ENCODE measurements at regions of chr14 and their contacts with region 1.

Region 1: GRCh38 chr14:49620182-49621113 is at the starts of genes MGAT2 and RPL36AL:
- DNase-seq: peak; percentile 82 to 98 (median 92)
- ATAC-seq: peak; percentile 84 to 86
- H3K4me3 Mint-ChIP-seq: peak within 1 kb of the TSS; percentile 93 to 99 (median 98)
- H3K27ac Mint-ChIP-seq: peak within 1 kb of the TSS; percentile 97 to 99 (median 99)
- H3K4me1 Mint-ChIP-seq: peaks cover 18 to 65% (median 51%) of the 10 kb centered on the region in 4 donors
- H3K27me3 Mint-ChIP-seq: no peaks in the 10 kb centered on the region
- polyA plus RNA-seq, gene MGAT2: 15.8 to 25.9 (median 19.8) TPM
- polyA plus RNA-seq, gene RPL36AL: 489 to 628 (median 623) TPM

Region 2: GRCh38 chr14:49585803-49586672 is 34.4 kb before region 1 on chr14 and contains the start of gene RPS29:
- POLR2A ChIA-PET with region 1: interaction called, 112 read pairs
- DNase-seq: peak; percentile 87 to 99 (median 98)
- ATAC-seq: peak; percentile 85 to 87
- H3K4me3 Mint-ChIP-seq: peak within 1 kb of the TSS; percentile 89 to 99 (median 94)
- H3K27ac Mint-ChIP-seq: peak within 1 kb of the TSS; percentile 97 to 100 (median 99)
- H3K4me1 Mint-ChIP-seq: peaks cover 21 to 55% (median 46%) of the 10 kb centered on the region in 4 donors
- H3K27me3 Mint-ChIP-seq: peaks cover 0 to 9% (median 0%) of the 10 kb centered on the region in 5 donors
- polyA plus RNA-seq, gene RPS29: 11,853 to 13,490 (median 12,998) TPM

Region 3: GRCh38 chr14:49598485-49599300 is 21.8 kb before region 1 on chr14 and contains the start of gene LRR1:
- POLR2A ChIA-PET with region 1: interaction called, 64 read pairs
- DNase-seq: peak; percentile 72 to 96 (median 84)
- ATAC-seq: peak; percentile 77 to 82
- H3K4me3 Mint-ChIP-seq: peak within 1 kb of the TSS; percentile 94 to 99 (median 98)
- H3K27ac Mint-ChIP-seq: peak within 1 kb of the TSS; percentile 96 to 100 (median 98)
- H3K4me1 Mint-ChIP-seq: peaks cover 5 to 52% (median 31%) of the 10 kb centered on the region in 4 donors
- H3K27me3 Mint-ChIP-seq: no peaks in the 10 kb centered on the region
- polyA plus RNA-seq, gene LRR1: 8.5 to 10.4 (median 8.9) TPM

Region 4: DNA sequence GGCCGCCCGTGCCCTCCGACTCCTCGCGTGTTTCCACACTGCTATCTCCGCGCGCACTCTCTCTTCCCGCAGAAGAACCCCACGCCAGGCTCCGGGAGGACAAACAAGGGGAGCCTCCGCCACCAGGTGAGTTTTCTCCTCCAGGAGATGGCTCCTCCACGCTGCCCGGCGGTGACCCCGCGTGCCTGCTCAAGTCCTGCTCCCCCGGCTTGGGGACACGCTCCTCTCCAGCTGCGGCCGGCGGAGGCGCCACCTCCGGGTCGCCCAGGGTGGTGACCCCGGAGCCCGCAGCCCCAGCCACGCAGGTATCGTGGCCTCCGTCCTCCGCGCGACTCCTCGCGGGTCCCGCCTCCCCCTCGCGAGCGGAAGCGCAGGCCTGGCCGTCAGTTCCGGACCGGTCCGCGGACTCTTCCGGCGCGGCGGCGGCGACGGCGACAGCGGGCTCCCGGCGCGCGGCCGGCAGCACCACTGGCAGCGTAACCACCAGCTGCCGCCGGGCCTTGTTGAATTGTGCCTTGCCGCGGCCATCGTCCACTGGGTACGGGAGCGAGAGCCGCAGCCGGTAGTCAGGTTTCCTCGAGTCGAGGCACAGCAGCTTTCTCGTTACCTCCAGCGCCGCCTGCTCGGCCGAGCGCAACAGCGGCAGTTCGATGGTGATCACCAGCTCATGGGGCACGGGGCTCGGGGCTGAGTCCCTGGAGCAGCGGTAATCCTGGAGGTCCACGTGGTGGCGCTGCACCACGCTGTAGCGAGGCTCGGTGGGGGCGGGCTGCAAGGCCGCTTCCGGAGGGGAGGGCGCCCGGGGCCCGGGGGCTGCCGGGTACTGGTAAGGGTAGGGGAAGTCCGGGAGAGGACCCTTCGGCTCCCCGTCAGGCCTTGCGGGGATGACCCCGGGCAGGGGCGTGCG is 13.4 kb after region 1 on chr14:
- POLR2A ChIA-PET with region 1: interaction called, 203 read pairs
- DNase-seq: peak; percentile 90 to 97 (median 94)
- ATAC-seq: peak; percentile 78 to 82
- H3K4me3 Mint-ChIP-seq: peak overlapping the region; percentile 92 to 99 (median 96)
- H3K27ac Mint-ChIP-seq: peak overlapping the region; percentile 90 to 98 (median 93)
- H3K4me1 Mint-ChIP-seq: peaks cover 15 to 65% (median 56%) of the 10 kb centered on the region in 4 donors
- H3K27me3 Mint-ChIP-seq: no peaks in the 10 kb centered on the region

Region 5: GRCh38 chr14:49692811-49693734 is 72.6 kb after region 1 on chr14 and contains the start of gene KLHDC1:
- POLR2A ChIA-PET with region 1: interaction called, 10 read pairs
- DNase-seq: peak; percentile 67 to 88 (median 78)
- ATAC-seq: peak; percentile 87 to 91
- H3K4me3 Mint-ChIP-seq: peak within 1 kb of the TSS; percentile 74 to 94 (median 90)
- H3K27ac Mint-ChIP-seq: peak within 1 kb of the TSS; percentile 66 to 98 (median 93)
- H3K4me1 Mint-ChIP-seq: peaks cover 2 to 54% (median 40%) of the 10 kb centered on the region in 4 donors
- H3K27me3 Mint-ChIP-seq: no peaks in the 10 kb centered on the region
- polyA plus RNA-seq, gene KLHDC1: 2.6 to 9.0 (median 3.2) TPM

Region 6: GRCh38 chr14:49727171-49727570 is 106.7 kb after region 1 on chr14:
- POLR2A ChIA-PET with region 1: no interaction called
- DNase-seq: no peak
- ATAC-seq: no peak
- H3K4me3 Mint-ChIP-seq: no peak overlapping the region
- H3K27ac Mint-ChIP-seq: peak overlapping the region in 1 of 10 donors; percentile 7
- H3K4me1 Mint-ChIP-seq: no peaks in the 10 kb centered on the region
- H3K27me3 Mint-ChIP-seq: no peaks in the 10 kb centered on the region

Region 7: GRCh38 chr14:49852301-49853157 is 232.1 kb after region 1 on chr14 and contains the start of gene NEMF:
- POLR2A ChIA-PET with region 1: interaction called, 17 read pairs
- DNase-seq: peak; percentile 57 to 89 (median 78)
- ATAC-seq: peak; percentile 80 to 84
- H3K4me3 Mint-ChIP-seq: peak within 1 kb of the TSS; percentile 91 to 100 (median 96)
- H3K27ac Mint-ChIP-seq: peak within 1 kb of the TSS; percentile 93 to 99 (median 96)
- H3K4me1 Mint-ChIP-seq: peaks cover 20 to 48% (median 46%) of the 10 kb centered on the region in 4 donors
- H3K27me3 Mint-ChIP-seq: no peaks in the 10 kb centered on the region
- polyA plus RNA-seq, gene NEMF: 39.6 to 46.1 (median 43.5) TPM

Region 8: DNA sequence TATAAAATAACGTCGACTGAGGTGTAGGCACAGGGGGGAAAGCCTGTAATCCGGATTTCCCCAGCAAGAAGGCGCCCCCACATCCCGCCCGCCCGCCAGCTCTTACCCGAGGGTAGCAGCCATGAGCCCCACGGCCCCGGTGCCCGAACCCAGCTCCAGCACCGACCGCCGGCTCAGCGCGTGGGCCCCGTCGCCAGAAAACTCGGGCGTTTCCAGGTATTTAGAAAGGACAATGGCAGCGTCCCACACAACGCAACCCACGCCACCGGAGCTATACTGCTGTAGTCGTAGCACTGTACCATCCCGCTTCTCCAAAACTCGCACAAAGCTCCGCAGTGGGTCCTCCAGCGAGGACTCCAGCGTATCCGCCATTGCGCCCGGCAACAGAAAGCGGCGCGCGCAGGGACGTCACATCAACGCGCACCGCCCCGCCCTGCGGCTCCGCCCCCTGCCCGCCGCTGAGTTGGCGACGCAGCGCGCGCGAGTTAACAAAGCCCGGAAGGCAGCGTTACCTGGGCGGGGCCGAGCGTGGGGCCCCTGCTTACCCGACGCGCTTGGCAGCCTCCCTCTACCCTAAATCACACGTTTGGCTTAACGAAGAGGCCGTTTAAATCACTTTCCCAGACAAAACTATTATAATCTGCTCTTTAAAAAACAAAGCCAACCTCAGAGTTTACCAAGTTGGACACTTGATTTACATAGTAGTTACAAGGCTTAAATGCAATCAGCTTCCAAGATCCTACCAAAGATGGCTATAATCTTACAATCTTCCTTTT is 495.9 kb after region 1 on chr14 and contains the start of gene VCPKMT:
- POLR2A ChIA-PET with region 1: interaction called, 14 read pairs
- DNase-seq: peak; percentile 90 to 98 (median 96)
- ATAC-seq: peak; percentile 95 to 96
- H3K4me3 Mint-ChIP-seq: peak within 1 kb of the TSS; percentile 91 to 99 (median 97)
- H3K27ac Mint-ChIP-seq: peak within 1 kb of the TSS; percentile 96 to 99 (median 99)
- H3K4me1 Mint-ChIP-seq: peaks cover 6 to 41% (median 24%) of the 10 kb centered on the region in 4 donors
- H3K27me3 Mint-ChIP-seq: no peaks in the 10 kb centered on the region
- polyA plus RNA-seq, gene VCPKMT: 8.8 to 10.4 (median 9.5) TPM

Measured in naive thymus-derived CD8-positive, alpha-beta T cell (primary cell).